GM12878 (cell line): ENCODE measurements at regions of chr6 and their contacts with region 1.

Region 1: GRCh38 chr6:88870717-88871330 is 92.6 kb downstream of the RNGTT start:
- DNase-seq: peak; percentile 39
- ATAC-seq: peak; percentile 78
- H3K4me3 ChIP-seq: no peak overlapping the region
- H3K27ac ChIP-seq: no peak overlapping the region
- H3K4me1 ChIP-seq: peaks cover 10% of the 10 kb centered on the region
- H3K27me3 ChIP-seq: no peaks in the 10 kb centered on the region
- CTCF ChIP-seq: peak; percentile 46 to 70 (median 55); a peak in 5 of 6 replicates
- EP300 ChIP-seq: no peak
- POLR2A ChIP-seq: no peak
- RAD21 ChIP-seq: peak; percentile 89

Region 2: DNA sequence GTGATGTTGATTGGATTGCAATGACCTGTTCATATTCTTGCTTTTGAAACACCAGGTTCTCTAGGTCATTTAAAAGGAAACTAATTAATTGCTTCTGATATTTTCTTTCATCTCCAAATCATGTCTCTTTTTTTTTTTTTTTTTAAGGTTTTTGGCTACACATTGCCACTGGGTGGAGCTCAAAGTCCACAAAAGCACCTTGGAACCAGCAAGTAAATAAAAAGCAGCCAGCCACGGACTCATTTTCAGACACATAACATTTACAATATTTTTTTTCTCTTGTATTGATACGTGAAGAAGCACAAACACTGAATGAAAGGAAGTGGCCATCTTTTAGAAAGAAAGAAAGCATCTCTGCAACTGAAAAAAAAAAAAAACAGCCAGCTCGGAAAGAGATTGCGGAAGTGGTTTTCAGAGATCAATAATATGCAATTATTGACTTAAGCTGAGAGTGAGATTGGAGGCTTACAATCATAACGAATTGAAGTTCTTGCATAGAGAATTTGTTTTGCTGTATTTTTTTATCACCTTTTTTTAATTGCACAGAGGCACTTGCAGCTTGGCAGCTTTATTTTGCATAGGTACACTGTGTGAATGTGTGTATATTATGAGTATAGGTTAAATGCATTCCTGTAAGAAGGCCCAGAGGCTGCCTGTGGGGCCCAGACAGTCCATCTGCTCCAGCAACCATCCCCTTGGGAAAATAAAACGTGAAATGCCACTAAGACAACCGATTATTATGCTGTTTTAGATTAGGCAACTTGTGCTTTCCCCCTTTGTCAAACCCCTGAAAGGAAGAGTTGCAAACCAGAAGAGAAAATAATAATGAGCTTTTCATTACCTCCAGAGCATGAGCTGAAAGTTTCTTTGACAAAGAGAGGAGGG is 1804.1 kb before region 1 on chr6:
- CTCF ChIA-PET with region 1: interaction called, 6 read pairs
- POLR2A ChIA-PET with region 1: no interaction called
- RAD21 ChIA-PET with region 1: interaction called, 18 read pairs
- SMC1A ChIA-PET with region 1: interaction called, 13 read pairs
- in situ Hi-C with region 1: no loop called
- intact Hi-C with region 1: no loop called
- DNase-seq: peak; percentile 28
- ATAC-seq: peak; percentile 53; the same call in 2 of the 3 replicates
- H3K4me3 ChIP-seq: no peak overlapping the region
- H3K27ac ChIP-seq: no peak overlapping the region
- H3K4me1 ChIP-seq: peaks cover 4% of the 10 kb centered on the region
- H3K27me3 ChIP-seq: no peaks in the 10 kb centered on the region
- CTCF ChIP-seq: peak; percentile 44 to 77 (median 62); a peak in 5 of 6 replicates
- EP300 ChIP-seq: no peak
- POLR2A ChIP-seq: no peak
- RAD21 ChIP-seq: peak; percentile 89

Region 3: GRCh38 chr6:87922947-87923330 is 947.9 kb before region 1 on chr6:
- CTCF ChIA-PET with region 1: interaction called, 94 read pairs
- POLR2A ChIA-PET with region 1: no interaction called
- RAD21 ChIA-PET with region 1: interaction called, 81 read pairs
- SMC1A ChIA-PET with region 1: interaction called, 118 read pairs
- in situ Hi-C with region 1: loop called (anchors 5 kb)
- intact Hi-C with region 1: no loop called
- DNase-seq: peak; percentile 86
- ATAC-seq: peak; percentile 75
- H3K4me3 ChIP-seq: no peak overlapping the region
- H3K27ac ChIP-seq: peak overlapping the region; percentile 94
- H3K4me1 ChIP-seq: peaks cover 71% of the 10 kb centered on the region
- H3K27me3 ChIP-seq: no peaks in the 10 kb centered on the region
- CTCF ChIP-seq: no peak
- EP300 ChIP-seq: peak; percentile 84 to 90
- POLR2A ChIP-seq: peak; percentile 34; the same call in 1 of the 2 replicates
- RAD21 ChIP-seq: no peak

Region 4: DNA sequence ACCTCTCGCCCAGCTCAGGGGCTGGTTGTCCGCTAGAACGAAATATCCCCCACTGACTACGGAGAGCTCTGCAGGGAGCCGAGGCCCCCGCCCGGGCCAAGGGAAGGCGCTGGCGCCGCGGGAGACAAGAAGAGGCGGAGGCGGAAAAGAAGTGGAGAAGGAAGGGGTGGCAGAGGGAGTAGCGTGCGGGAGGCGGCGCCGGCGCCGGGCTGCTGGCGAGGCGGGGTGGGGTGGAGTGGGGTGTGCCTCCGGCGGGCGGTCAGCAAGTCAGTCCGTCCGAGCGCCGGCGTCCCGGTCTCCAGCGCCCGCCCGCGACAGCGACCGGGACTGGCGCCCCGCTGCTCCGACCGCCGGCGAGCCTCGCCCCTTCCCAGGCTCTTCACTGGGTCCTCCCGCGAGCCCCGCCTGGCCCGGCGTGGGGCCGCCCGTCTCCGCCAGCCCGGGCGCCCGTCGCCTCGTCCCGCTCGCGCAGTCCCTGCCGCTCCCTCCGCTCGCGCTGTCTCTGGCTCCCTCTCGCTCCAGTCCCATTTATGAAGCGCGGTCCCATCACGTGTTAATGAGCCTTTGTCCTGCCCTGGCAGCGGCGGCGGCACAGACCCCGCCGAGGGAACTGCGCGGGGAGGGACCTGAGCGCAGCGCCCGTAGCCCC is 704.9 kb before region 1 on chr6 and contains the start of gene CNR1:
- CTCF ChIA-PET with region 1: interaction called, 21 read pairs
- POLR2A ChIA-PET with region 1: no interaction called
- RAD21 ChIA-PET with region 1: interaction called, 17 read pairs
- SMC1A ChIA-PET with region 1: interaction called, 9 read pairs
- in situ Hi-C with region 1: no loop called
- intact Hi-C with region 1: loop called (anchors 5 kb)
- DNase-seq: no peak
- ATAC-seq: peak; percentile 76
- H3K4me3 ChIP-seq: peak within 1 kb of the TSS; percentile 94
- H3K27ac ChIP-seq: no peak within 1 kb of the TSS; the same call in 1 of the 2 replicates
- H3K4me1 ChIP-seq: no peaks in the 10 kb centered on the region
- H3K27me3 ChIP-seq: 0 out of 4 replicates have a peak, but pooled peaks cover 0 to 6% of the 10 kb centered on the region in 2 experiments
- CTCF ChIP-seq: peak; percentile 24 to 47 (median 33); a peak in 4 of 6 replicates
- EP300 ChIP-seq: no peak
- POLR2A ChIP-seq: peak; percentile 77
- RAD21 ChIP-seq: no peak; the same call in 1 of the 2 replicates
- polyA plus RNA-seq, gene CNR1: 2.2 to 3.1 TPM

Region 5: GRCh38 chr6:88641178-88641903 is 229.5 kb before region 1 on chr6:
- CTCF ChIA-PET with region 1: interaction called, 11 read pairs
- POLR2A ChIA-PET with region 1: no interaction called
- RAD21 ChIA-PET with region 1: interaction called, 9 read pairs
- SMC1A ChIA-PET with region 1: interaction called, 5 read pairs
- in situ Hi-C with region 1: no loop called
- intact Hi-C with region 1: no loop called
- DNase-seq: peak; percentile 88
- ATAC-seq: peak; percentile 92
- H3K4me3 ChIP-seq: 0 out of 2 replicates have a peak overlapping the region, but pooled peaks have one; percentile 8
- H3K27ac ChIP-seq: peak overlapping the region; percentile 88
- H3K4me1 ChIP-seq: peaks cover 15% of the 10 kb centered on the region
- H3K27me3 ChIP-seq: no peaks in the 10 kb centered on the region
- CTCF ChIP-seq: no peak
- EP300 ChIP-seq: peak; percentile 12 to 58; a peak in 1 of 4 replicates
- POLR2A ChIP-seq: no peak
- RAD21 ChIP-seq: no peak

Region 6: GRCh38 chr6:88823998-88824397 is 46.8 kb before region 1 on chr6:
- CTCF ChIA-PET with region 1: no interaction called
- POLR2A ChIA-PET with region 1: no interaction called
- RAD21 ChIA-PET with region 1: no interaction called
- SMC1A ChIA-PET with region 1: no interaction called
- in situ Hi-C with region 1: no loop called
- intact Hi-C with region 1: no loop called
- DNase-seq: no peak
- ATAC-seq: no peak
- H3K4me3 ChIP-seq: no peak overlapping the region
- H3K27ac ChIP-seq: no peak overlapping the region
- H3K4me1 ChIP-seq: no peaks in the 10 kb centered on the region
- H3K27me3 ChIP-seq: no peaks in the 10 kb centered on the region
- CTCF ChIP-seq: no peak
- EP300 ChIP-seq: no peak
- POLR2A ChIP-seq: no peak
- RAD21 ChIP-seq: no peak

Region 7: GRCh38 chr6:88855541-88856147 is 15.2 kb before region 1 on chr6:
- CTCF ChIA-PET with region 1: interaction called, 24 read pairs
- POLR2A ChIA-PET with region 1: no interaction called
- RAD21 ChIA-PET with region 1: interaction called, 16 read pairs
- SMC1A ChIA-PET with region 1: interaction called, 56 read pairs
- in situ Hi-C with region 1: no loop called
- intact Hi-C with region 1: no loop called
- DNase-seq: no peak
- ATAC-seq: no peak
- H3K4me3 ChIP-seq: no peak overlapping the region
- H3K27ac ChIP-seq: no peak overlapping the region
- H3K4me1 ChIP-seq: no peaks in the 10 kb centered on the region
- H3K27me3 ChIP-seq: no peaks in the 10 kb centered on the region
- CTCF ChIP-seq: no peak
- EP300 ChIP-seq: no peak
- POLR2A ChIP-seq: no peak
- RAD21 ChIP-seq: no peak

Region 8: GRCh38 chr6:88919032-88919431 is 48.2 kb after region 1 on chr6:
- CTCF ChIA-PET with region 1: interaction called, 17 read pairs
- POLR2A ChIA-PET with region 1: interaction called, 5 read pairs
- RAD21 ChIA-PET with region 1: interaction called, 29 read pairs
- SMC1A ChIA-PET with region 1: interaction called, 3 read pairs
- in situ Hi-C with region 1: no loop called
- intact Hi-C with region 1: no loop called
- DNase-seq: no peak
- ATAC-seq: 0 out of 3 replicates have a peak, but pooled peaks have one; percentile 31
- H3K4me3 ChIP-seq: no peak overlapping the region
- H3K27ac ChIP-seq: no peak overlapping the region
- H3K4me1 ChIP-seq: no peaks in the 10 kb centered on the region
- H3K27me3 ChIP-seq: no peaks in the 10 kb centered on the region
- CTCF ChIP-seq: peak in 2 of 3 experiments; percentile 5 to 25; a peak in 3 of 6 replicates
- EP300 ChIP-seq: no peak
- POLR2A ChIP-seq: no peak
- RAD21 ChIP-seq: 0 out of 2 replicates have a peak, but pooled peaks have one; percentile 9